GM13976 (cell line): ENCODE measurements at regions of chr12 and their contacts with region 1.

Region 1: GRCh38 chr12:120265473-120266179 is at the start of gene PXN:
- DNase-seq: peak; percentile 96
- CTCF ChIP-seq: peak; percentile 78

Region 2: GRCh38 chr12:120228291-120229070 is 37.1 kb before region 1 on chr12:
- in situ Hi-C with region 1: loop called (anchors 5 kb)
- DNase-seq: peak; percentile 94
- CTCF ChIP-seq: peak; percentile 90